K562 (cell line): ENCODE measurements at regions of chr15 and their contacts with region 1.

Region 1: GRCh38 chr15:35450492-35450891 is 95.5 kb downstream of the DPH6 start:
- DNase-seq: no peak
- ATAC-seq: no peak
- H3K4me3 ChIP-seq: no peak overlapping the region
- H3K27ac ChIP-seq: no peak overlapping the region
- H3K4me1 ChIP-seq: no peaks in the 10 kb centered on the region
- H3K27me3 ChIP-seq: no peaks in the 10 kb centered on the region
- CTCF ChIP-seq: no peak
- EP300 ChIP-seq: no peak
- POLR2A ChIP-seq: no peak
- RAD21 ChIP-seq: no peak

Region 2: GRCh38 chr15:35095941-35096340 is 354.6 kb before region 1 on chr15:
- CTCF ChIA-PET with region 1: no interaction called
- POLR2A ChIA-PET with region 1: no interaction called
- in situ Hi-C with region 1: no loop called
- intact Hi-C with region 1: no loop called
- DNase-seq: no peak
- ATAC-seq: no peak
- H3K4me3 ChIP-seq: no peak overlapping the region
- H3K27ac ChIP-seq: no peak overlapping the region
- H3K4me1 ChIP-seq: no peaks in the 10 kb centered on the region
- H3K27me3 ChIP-seq: no peaks in the 10 kb centered on the region
- CTCF ChIP-seq: no peak
- EP300 ChIP-seq: no peak
- POLR2A ChIP-seq: no peak
- RAD21 ChIP-seq: no peak

Region 3: GRCh38 chr15:35507932-35508638 is 57.6 kb after region 1 on chr15:
- CTCF ChIA-PET with region 1: no interaction called
- POLR2A ChIA-PET with region 1: no interaction called
- in situ Hi-C with region 1: no loop called
- intact Hi-C with region 1: loop called (anchors 10 kb)
- DNase-seq: no peak
- ATAC-seq: no peak
- H3K4me3 ChIP-seq: no peak overlapping the region
- H3K27ac ChIP-seq: no peak overlapping the region
- H3K4me1 ChIP-seq: no peaks in the 10 kb centered on the region
- H3K27me3 ChIP-seq: no peaks in the 10 kb centered on the region
- CTCF ChIP-seq: no peak
- EP300 ChIP-seq: no peak
- POLR2A ChIP-seq: no peak
- RAD21 ChIP-seq: no peak

Region 4: DNA sequence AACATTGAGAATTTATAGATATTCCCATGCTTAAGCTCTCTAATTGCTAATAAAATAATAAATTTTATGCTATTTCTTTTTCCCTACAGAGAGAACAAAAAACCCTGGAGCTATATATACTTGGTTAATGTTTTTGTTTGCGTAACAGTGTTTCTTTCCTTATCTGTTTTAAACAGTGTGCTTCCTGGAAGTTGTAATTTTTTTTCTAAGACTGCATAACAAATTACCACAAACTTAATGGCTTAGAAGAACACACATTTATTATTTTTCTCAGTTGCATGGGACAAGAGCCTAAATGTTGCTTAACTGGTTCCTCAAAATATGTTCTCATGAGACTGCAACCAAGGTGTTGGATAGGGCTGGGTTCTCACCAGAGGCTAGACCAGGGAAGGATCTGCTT is 145.2 kb after region 1 on chr15:
- CTCF ChIA-PET with region 1: no interaction called
- POLR2A ChIA-PET with region 1: no interaction called
- in situ Hi-C with region 1: no loop called
- intact Hi-C with region 1: no loop called
- DNase-seq: no peak
- ATAC-seq: no peak
- H3K4me3 ChIP-seq: no peak overlapping the region
- H3K27ac ChIP-seq: no peak overlapping the region
- H3K4me1 ChIP-seq: peaks cover 0 to 11% of the 10 kb centered on the region in 2 experiments; a peak in 2 of 5 replicates
- H3K27me3 ChIP-seq: no peaks in the 10 kb centered on the region
- CTCF ChIP-seq: no peak
- EP300 ChIP-seq: no peak
- POLR2A ChIP-seq: no peak
- RAD21 ChIP-seq: no peak